ENCODE measurements at regions of chr17 and their contacts with region 1.

Region 1: DNA sequence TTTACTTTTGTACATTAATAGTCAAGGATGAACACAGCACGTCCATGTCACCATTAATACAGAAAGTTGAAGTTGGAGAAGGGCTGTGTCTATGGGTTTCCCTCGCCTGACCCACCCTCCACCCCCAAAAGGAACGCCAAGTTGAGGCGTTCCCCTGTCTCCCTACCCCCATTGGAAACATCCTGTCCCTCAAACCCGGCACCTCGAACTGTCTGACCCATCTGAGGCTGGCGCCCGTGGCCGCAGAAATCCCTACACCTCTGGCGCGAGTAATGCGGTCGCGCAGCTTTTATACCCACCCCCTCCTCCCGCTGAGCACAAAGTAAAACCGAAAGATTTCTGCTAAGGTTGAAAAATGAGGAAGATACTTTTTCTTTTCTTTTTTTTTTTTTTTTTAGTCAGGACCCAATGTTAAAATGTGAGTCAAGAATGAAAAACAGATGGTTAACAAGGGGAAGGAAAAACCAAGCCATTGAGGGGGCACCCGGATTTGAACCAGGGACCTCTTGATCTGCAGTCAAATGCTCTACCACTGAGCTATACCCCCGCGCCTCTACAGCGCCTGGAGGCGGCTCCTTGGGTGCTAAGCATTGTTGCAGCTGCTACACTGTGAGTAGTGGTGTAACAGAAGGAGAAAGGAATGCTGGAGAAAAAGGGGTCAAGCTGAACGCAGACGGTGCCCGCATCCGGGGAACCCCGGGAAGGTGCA is 887 bp upstream of the LASP1 start:
- DNase-seq: peak; percentile 94
- ATAC-seq: peak; percentile 48
- H3K4me3 Mint-ChIP-seq: peak overlapping the region; percentile 90
- H3K27ac Mint-ChIP-seq: peak overlapping the region; percentile 98
- H3K4me1 Mint-ChIP-seq: peaks cover 40% of the 10 kb centered on the region
- H3K27me3 Mint-ChIP-seq: peaks cover 1% of the 10 kb centered on the region
- CTCF ChIP-seq: no peak

Region 2: GRCh38 chr17:38809828-38810227 is 59.1 kb before region 1 on chr17:
- CTCF ChIA-PET with region 1: no interaction called
- POLR2A ChIA-PET with region 1: no interaction called
- intact Hi-C with region 1: no loop called
- DNase-seq: no peak
- ATAC-seq: no peak
- H3K4me3 Mint-ChIP-seq: no peak overlapping the region
- H3K27ac Mint-ChIP-seq: no peak overlapping the region
- H3K4me1 Mint-ChIP-seq: no peaks in the 10 kb centered on the region
- H3K27me3 Mint-ChIP-seq: no peaks in the 10 kb centered on the region
- CTCF ChIP-seq: no peak

Region 3: DNA sequence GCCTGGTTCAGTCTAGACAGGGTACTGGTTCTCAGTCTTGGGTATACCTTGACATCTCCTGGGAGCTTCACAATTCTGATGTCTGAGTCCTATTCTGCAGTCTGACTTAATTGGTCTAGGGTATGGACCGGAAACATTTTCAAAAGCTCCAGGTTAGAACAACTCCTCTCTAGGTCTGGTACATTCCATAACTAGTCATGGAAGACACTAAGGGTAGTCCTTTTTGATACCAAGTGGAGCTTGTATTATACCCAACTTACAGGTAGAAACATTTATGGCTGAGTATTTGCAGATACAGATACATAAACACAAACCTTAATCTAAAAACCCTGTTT is 20.4 kb before region 1 on chr17:
- CTCF ChIA-PET with region 1: interaction called, 11 read pairs
- POLR2A ChIA-PET with region 1: interaction called, 106 read pairs
- intact Hi-C with region 1: no loop called
- DNase-seq: no peak
- ATAC-seq: no peak
- H3K4me3 Mint-ChIP-seq: peak overlapping the region; percentile 42
- H3K27ac Mint-ChIP-seq: peak overlapping the region; percentile 30
- H3K4me1 Mint-ChIP-seq: peaks cover 32% of the 10 kb centered on the region
- H3K27me3 Mint-ChIP-seq: no peaks in the 10 kb centered on the region
- CTCF ChIP-seq: no peak

Region 4: DNA sequence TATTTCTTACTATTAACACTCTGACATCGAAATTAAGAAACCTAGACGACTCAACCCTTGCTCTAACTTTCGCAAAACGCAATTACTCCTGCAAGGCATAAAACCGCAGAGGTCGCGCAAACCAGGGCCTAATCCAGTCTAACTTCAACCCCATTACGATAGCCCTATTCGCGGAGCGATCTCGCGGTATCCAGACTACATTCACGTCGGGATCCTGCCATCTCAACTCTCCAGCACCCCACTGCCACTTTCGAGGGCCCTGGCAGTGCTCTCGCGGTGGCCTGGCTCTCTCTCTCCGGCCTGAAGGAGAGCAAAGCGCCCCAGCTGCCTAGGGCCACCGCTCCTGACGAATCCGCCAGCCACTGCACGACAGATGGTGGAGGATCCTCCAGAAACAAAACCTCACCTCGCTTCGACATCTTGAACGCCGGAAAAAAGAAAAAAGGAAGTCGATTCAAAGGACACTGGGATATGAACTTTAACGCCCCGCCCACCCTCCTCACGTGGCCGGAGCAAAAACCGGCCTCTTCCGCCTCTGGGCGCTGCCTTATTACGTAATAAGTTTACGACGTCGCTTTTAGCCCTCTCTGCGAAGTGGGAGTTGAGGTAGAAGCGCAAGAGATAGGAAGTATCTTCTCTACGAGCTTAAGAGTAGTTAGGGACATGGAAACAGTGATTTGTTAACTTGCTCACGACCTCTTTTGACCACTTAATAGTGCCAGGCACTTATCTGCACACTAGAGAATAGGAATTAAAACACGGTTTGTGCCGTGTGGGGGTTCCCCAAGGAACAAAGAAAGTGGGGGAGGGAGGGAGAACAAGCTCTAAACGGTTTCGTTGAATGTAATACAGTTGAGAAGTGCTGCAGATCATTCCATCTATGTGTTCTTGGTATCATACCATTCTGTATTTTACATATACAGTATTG is 15.4 kb before region 1 on chr17 and contains the start of gene RPL23:
- CTCF ChIA-PET with region 1: interaction called, 11 read pairs
- POLR2A ChIA-PET with region 1: interaction called, 106 read pairs
- intact Hi-C with region 1: loop called (anchors 2 kb)
- DNase-seq: peak; percentile 97
- ATAC-seq: peak; percentile 88
- H3K4me3 Mint-ChIP-seq: peak within 1 kb of the TSS; percentile 99
- H3K27ac Mint-ChIP-seq: peak within 1 kb of the TSS; percentile 99
- H3K4me1 Mint-ChIP-seq: peaks cover 40% of the 10 kb centered on the region
- H3K27me3 Mint-ChIP-seq: no peaks in the 10 kb centered on the region
- CTCF ChIP-seq: no peak
- total RNA-seq, gene RPL23: 1,908 to 1,957 TPM

Region 5: DNA sequence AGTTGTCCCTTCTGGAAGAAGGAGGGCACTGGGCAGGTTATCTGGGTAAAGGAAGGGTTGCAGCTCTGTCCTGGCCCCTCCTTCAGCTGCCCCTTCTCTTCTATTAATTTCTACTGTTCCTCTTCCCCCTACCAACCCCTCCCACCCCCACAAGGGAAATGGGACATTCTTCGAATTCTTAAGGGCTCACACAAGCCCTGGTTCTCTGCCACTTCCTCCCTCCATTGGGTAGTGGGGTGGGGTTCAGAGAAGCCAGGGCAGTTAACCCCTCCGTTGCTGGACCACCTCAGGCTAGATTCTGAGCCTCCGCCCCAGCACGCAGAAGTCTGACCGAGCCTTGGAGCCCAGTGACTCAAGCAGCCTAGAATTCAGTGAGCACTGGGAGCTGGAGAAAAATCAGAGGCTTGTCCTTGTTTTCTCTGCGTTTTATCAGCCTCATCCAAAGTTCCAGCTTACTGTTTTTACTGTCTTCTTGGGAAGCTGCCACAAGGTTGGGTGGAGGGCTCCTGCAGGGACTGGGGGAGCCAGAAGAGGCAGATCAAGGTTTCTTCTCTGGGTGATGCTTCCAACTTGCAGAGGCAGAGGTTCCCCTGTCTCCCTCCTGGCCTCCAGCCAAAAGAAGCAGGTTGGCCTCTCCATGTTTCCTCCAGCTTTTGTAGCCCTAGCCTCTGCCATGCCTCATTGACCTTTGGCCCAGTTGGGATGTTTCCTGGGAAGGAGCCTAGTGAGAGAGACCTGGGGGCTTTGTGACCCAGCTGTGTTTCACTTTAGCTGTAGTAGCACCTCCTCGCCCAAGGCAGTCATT is 11.1 kb after region 1 on chr17:
- CTCF ChIA-PET with region 1: interaction called, 13 read pairs
- POLR2A ChIA-PET with region 1: interaction called, 91 read pairs
- intact Hi-C with region 1: no loop called
- DNase-seq: peak; percentile 46
- ATAC-seq: no peak
- H3K4me3 Mint-ChIP-seq: peak overlapping the region; percentile 44
- H3K27ac Mint-ChIP-seq: peak overlapping the region; percentile 85
- H3K4me1 Mint-ChIP-seq: peaks cover 86% of the 10 kb centered on the region
- H3K27me3 Mint-ChIP-seq: no peaks in the 10 kb centered on the region
- CTCF ChIP-seq: no peak

Region 6: DNA sequence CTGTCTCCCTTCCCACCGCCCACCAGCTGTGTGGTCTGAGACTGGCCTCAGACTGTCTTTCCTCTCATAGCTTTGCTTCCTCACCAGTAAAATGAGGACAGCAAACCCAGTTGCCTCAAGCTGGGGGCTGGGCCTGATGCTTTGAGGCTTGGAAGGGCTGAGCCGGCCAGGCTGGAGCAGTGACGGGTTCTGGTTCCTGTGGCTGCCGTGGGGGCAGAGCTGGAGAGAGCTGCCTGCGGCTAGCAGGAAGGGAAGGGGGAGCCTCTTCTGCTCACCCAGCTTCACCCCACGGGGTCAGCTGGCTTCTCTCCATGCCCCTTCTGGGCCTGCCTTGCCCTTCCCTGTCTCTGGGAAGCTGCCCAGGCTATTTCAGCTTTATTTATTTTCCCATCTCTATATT is 24.6 kb after region 1 on chr17:
- CTCF ChIA-PET with region 1: interaction called, 25 read pairs
- POLR2A ChIA-PET with region 1: interaction called, 55 read pairs
- intact Hi-C with region 1: no loop called
- DNase-seq: peak; percentile 75
- ATAC-seq: peak; percentile 45
- H3K4me3 Mint-ChIP-seq: no peak overlapping the region
- H3K27ac Mint-ChIP-seq: peak overlapping the region; percentile 82
- H3K4me1 Mint-ChIP-seq: peaks cover 88% of the 10 kb centered on the region
- H3K27me3 Mint-ChIP-seq: no peaks in the 10 kb centered on the region
- CTCF ChIP-seq: no peak

Region 7: GRCh38 chr17:38922538-38923297 is 53.7 kb after region 1 on chr17:
- CTCF ChIA-PET with region 1: interaction called, 16 read pairs
- POLR2A ChIA-PET with region 1: interaction called, 10 read pairs
- intact Hi-C with region 1: loop called (anchors 5 kb)
- DNase-seq: no peak
- ATAC-seq: no peak
- H3K4me3 Mint-ChIP-seq: no peak overlapping the region
- H3K27ac Mint-ChIP-seq: peak overlapping the region; percentile 62
- H3K4me1 Mint-ChIP-seq: peaks cover 53% of the 10 kb centered on the region
- H3K27me3 Mint-ChIP-seq: no peaks in the 10 kb centered on the region
- CTCF ChIP-seq: no peak